Panc1 (cell line): ENCODE measurements at regions of chr5 and their contacts with region 1.

Region 1: DNA sequence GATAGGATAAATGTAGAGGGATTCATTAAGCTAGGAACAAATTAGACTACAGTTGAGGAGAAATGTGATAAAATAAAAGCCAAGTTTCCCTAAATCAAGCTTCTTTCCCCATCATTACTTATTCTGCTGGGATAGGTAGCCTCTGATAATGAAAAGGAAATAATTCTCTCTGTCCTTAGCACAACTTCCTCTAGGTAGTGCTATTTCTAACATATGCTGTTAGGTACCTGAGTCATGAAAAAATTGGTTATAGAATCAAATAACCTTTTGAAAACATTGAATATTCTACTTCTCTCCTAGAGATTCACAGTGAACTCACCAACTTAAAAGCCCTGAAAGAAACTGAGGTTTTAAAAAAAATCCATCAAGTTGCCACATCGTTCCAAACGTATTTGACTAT is 1793.1 kb downstream of the EFNA5 start:
- DNase-seq: no peak
- ATAC-seq: no peak
- H3K4me3 ChIP-seq: no peak overlapping the region
- H3K27ac ChIP-seq: no peak overlapping the region
- H3K4me1 ChIP-seq: no peaks in the 10 kb centered on the region
- H3K27me3 ChIP-seq: no peaks in the 10 kb centered on the region
- CTCF ChIP-seq: peak; percentile 5; the same call in 1 of the 2 replicates

Region 2: DNA sequence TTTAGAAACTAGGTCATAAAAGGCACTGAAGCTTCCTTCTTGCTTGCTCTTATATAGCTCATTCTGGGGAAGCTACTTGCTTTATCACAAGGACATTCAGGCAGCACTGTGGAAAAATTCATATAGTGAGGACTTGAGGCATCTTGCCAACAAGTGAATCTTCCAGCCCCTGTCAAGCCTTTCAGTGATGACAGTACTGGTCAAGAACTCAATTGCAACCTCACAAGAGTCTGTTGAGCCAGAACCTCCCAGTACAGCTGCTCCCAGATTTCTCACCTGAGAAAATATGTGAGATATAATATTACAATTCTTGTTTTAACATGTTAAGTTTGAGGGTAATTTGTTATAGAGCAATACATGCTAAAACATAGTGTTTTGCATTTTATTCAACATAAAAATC is 304.0 kb before region 1 on chr5:
- CTCF ChIA-PET with region 1: no interaction called
- POLR2A ChIA-PET with region 1: no interaction called
- in situ Hi-C with region 1: no loop called
- intact Hi-C with region 1: loop called (anchors 5 kb)
- DNase-seq: no peak
- ATAC-seq: no peak
- H3K4me3 ChIP-seq: no peak overlapping the region
- H3K27ac ChIP-seq: no peak overlapping the region
- H3K4me1 ChIP-seq: no peaks in the 10 kb centered on the region
- H3K27me3 ChIP-seq: no peaks in the 10 kb centered on the region
- CTCF ChIP-seq: no peak

Region 3: DNA sequence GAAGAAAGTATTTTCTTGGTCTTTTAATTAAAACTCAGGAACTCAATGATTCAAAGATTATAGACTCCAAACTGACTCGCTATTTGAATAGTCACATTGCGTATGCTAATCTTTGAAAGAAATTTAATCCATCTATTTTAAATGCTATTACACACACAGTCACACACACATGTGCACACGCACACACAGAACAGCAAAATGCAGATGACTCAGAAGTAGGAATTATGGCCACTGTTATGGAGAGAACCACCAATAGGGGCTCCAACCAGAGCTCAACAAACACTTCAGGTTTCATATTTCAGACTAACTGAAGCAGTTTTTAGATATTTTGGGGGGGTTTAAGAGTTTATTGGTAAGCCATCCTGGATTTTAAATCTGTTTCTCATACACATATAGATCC is 124.8 kb before region 1 on chr5:
- CTCF ChIA-PET with region 1: no interaction called
- POLR2A ChIA-PET with region 1: no interaction called
- in situ Hi-C with region 1: no loop called
- intact Hi-C with region 1: no loop called
- DNase-seq: no peak
- ATAC-seq: no peak
- H3K4me3 ChIP-seq: no peak overlapping the region
- H3K27ac ChIP-seq: no peak overlapping the region
- H3K4me1 ChIP-seq: no peaks in the 10 kb centered on the region
- H3K27me3 ChIP-seq: no peaks in the 10 kb centered on the region
- CTCF ChIP-seq: no peak

Region 4: GRCh38 chr5:105836268-105836667 is 41.3 kb before region 1 on chr5:
- CTCF ChIA-PET with region 1: no interaction called
- POLR2A ChIA-PET with region 1: no interaction called
- in situ Hi-C with region 1: no loop called
- intact Hi-C with region 1: no loop called
- DNase-seq: no peak
- ATAC-seq: no peak
- H3K4me3 ChIP-seq: no peak overlapping the region
- H3K27ac ChIP-seq: no peak overlapping the region
- H3K4me1 ChIP-seq: no peaks in the 10 kb centered on the region
- H3K27me3 ChIP-seq: no peaks in the 10 kb centered on the region
- CTCF ChIP-seq: no peak

Region 5: DNA sequence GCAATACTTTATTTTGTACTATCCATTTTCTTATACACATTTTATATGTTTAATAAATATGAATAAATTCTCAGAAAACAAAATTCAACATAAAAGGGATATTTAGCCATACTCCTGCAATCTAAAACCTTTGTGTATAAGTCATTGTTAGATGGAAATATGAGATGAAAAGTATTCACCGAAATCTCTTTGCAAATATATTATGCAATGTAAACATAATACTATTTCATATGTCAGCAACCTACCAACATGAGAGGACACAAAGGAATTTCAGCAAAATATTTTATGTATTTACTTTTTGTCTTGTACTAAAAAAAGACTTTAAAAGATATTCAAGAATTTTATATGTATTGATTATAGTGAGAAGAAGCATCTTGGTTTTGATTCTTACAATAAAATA is 169.7 kb after region 1 on chr5:
- CTCF ChIA-PET with region 1: no interaction called
- POLR2A ChIA-PET with region 1: no interaction called
- in situ Hi-C with region 1: no loop called
- intact Hi-C with region 1: no loop called
- DNase-seq: no peak
- ATAC-seq: no peak
- H3K4me3 ChIP-seq: no peak overlapping the region
- H3K27ac ChIP-seq: no peak overlapping the region
- H3K4me1 ChIP-seq: no peaks in the 10 kb centered on the region
- H3K27me3 ChIP-seq: no peaks in the 10 kb centered on the region
- CTCF ChIP-seq: no peak